HEK293 (cell line): ENCODE measurements at regions of chr16 and their contacts with region 1.

Region 1: DNA sequence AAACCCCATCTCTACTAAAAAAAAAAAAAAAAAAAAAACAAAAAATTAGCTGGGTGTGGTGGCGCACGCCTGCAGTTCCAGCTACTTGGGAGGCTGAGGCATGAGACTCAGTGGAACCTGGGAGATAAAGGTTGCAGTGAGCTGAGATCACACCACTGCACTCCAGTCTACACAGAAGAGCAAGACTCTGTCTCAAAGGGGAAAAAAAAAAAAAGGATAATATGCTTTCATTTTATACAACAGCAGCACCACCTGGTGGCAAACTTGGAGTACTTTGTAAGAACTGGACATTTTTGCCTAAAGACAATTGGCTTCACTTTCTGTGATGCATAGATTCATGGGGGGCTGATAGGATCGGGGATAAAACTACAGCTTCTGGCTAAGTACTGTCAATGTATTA is 8.5 kb downstream of the CHTF8 start:
- H3K4me3 ChIP-seq: no peak overlapping the region
- H3K27ac ChIP-seq: no peak overlapping the region
- H3K4me1 ChIP-seq: no peaks in the 10 kb centered on the region
- CTCF ChIP-seq: no peak

Region 2: GRCh38 chr16:68590201-68590994 is 533.5 kb before region 1 on chr16:
- CTCF ChIA-PET with region 1: interaction called, 14 read pairs
- POLR2A ChIA-PET with region 1: no interaction called
- H3K4me3 ChIP-seq: no peak overlapping the region
- H3K27ac ChIP-seq: no peak overlapping the region
- H3K4me1 ChIP-seq: no peaks in the 10 kb centered on the region
- CTCF ChIP-seq: peak; percentile 90

Region 3: GRCh38 chr16:68848786-68849185 is 275.1 kb before region 1 on chr16:
- CTCF ChIA-PET with region 1: interaction called, 28 read pairs
- POLR2A ChIA-PET with region 1: interaction called, 3 read pairs
- H3K4me3 ChIP-seq: no peak overlapping the region
- H3K27ac ChIP-seq: no peak overlapping the region
- H3K4me1 ChIP-seq: no peaks in the 10 kb centered on the region
- CTCF ChIP-seq: no peak

Region 4: DNA sequence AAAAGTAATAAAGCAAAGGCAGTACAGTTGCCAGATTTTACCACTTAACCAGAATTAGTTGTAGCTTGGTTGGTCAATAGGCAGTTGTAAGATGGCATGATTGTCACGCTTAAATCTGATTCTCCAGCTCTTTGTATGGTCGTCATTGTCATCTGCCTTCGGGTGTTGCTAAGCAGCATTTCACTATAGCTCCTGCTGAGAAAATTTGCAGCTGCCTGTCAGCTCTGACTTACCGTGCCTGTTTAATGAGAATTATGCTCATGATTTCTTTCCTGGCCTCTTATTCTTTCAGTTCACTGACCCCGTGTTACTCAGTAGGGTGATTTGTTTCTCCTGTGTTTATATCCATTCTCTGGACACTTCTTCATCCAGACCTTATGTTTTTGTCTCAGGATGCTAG is 213.9 kb before region 1 on chr16:
- CTCF ChIA-PET with region 1: interaction called, 51 read pairs
- POLR2A ChIA-PET with region 1: no interaction called
- H3K4me3 ChIP-seq: no peak overlapping the region
- H3K27ac ChIP-seq: no peak overlapping the region
- H3K4me1 ChIP-seq: no peaks in the 10 kb centered on the region
- CTCF ChIP-seq: no peak

Region 5: GRCh38 chr16:69003500-69003899 is 120.4 kb before region 1 on chr16:
- CTCF ChIA-PET with region 1: no interaction called
- POLR2A ChIA-PET with region 1: no interaction called
- H3K4me3 ChIP-seq: no peak overlapping the region
- H3K27ac ChIP-seq: no peak overlapping the region
- H3K4me1 ChIP-seq: no peaks in the 10 kb centered on the region
- CTCF ChIP-seq: no peak

Region 6: GRCh38 chr16:69073161-69073669 is 50.7 kb before region 1 on chr16:
- CTCF ChIA-PET with region 1: no interaction called
- POLR2A ChIA-PET with region 1: no interaction called
- H3K4me3 ChIP-seq: no peak overlapping the region
- H3K27ac ChIP-seq: no peak overlapping the region
- H3K4me1 ChIP-seq: peaks cover 8% of the 10 kb centered on the region
- CTCF ChIP-seq: no peak

Region 7: DNA sequence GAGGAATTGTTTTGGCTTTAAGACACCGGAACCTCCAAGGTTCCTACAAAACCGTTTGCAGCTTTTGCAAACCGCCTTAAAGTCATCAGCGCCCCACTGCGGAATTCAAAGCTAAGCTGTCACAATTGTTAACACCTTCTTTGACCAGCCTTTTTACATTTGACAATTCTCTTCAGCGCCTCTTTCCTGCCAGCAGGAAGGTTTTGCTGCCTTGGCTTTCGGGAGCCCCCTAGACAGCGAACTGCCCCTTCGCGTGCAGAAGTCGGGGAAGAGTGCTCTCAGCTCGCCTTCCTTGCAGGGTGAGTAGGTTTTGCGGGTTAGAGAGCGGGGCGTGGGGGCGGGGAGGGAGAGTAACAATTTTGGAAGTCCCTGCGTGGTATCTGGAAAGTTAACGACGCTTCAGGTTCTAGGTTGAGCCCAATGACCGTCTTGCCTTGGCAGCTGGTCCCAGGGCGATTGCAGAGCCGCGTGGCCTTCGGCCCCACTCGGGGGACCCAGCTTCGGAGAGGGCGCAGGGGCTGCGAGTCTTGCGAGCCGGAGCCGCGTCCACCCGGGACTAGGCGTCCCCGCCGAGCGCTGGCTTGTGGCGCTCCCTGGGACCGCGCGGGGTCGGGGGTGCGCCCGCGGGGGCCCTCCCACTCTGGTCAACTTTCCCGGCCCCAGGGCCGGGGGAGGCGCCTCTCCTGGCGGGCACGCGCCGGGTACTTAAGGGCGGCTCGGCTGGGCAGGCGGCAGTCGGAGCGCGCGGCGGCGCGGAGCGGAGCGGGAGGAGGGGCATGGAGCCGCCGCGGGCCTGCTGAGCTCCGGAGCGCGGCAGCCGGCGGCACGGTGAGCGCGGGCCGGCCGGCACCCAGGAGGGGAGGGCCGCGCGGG is 18.2 kb before region 1 on chr16 and contains the start of gene HAS3:
- CTCF ChIA-PET with region 1: interaction called, 19 read pairs
- POLR2A ChIA-PET with region 1: interaction called, 3 read pairs
- H3K4me3 ChIP-seq: peak within 1 kb of the TSS; percentile 49
- H3K27ac ChIP-seq: peak within 1 kb of the TSS; percentile 63; the same call in 1 of the 2 replicates
- H3K4me1 ChIP-seq: no peaks in the 10 kb centered on the region; the same call in 1 of the 2 replicates
- CTCF ChIP-seq: peak; percentile 73

Region 8: DNA sequence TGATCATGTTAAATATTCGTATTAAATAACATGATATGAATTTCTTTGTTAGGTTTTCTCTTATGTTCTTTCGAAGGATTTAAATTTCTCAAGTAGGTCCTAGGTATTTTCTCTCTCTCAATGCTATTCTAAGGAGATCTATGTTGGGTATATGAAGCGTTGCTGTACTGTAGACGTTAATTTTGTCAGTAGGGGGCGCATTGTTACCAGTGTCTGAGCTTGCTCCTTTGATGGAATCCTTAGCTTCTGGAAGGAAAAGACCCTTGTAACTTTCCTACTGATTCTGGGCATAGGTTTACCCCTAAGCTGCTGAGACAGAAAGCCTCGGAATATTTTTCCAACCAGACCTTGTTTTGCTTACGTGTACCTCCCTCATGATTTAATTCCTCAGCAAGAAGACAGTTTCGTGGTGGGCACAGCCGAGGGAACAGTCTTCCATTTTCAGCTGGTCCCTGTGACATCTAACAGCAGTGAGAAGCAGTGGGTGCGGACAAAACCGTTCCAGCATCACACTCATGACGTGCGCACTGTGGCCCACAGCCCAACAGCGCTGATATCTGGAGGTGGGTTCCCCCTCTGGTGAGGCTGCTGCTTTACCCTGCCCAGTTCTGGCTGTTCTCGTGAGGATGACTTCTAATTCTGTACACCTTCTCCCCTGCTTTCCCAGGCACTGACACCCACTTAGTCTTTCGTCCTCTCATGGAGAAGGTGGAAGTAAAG is 26.4 kb after region 1 on chr16:
- CTCF ChIA-PET with region 1: no interaction called
- POLR2A ChIA-PET with region 1: no interaction called
- H3K4me3 ChIP-seq: no peak overlapping the region
- H3K27ac ChIP-seq: no peak overlapping the region
- H3K4me1 ChIP-seq: no peaks in the 10 kb centered on the region
- CTCF ChIP-seq: peak; percentile 67; the same call in 1 of the 2 replicates